ENCODE measurements at regions of chr1 and their contacts with region 1.

Region 1: DNA sequence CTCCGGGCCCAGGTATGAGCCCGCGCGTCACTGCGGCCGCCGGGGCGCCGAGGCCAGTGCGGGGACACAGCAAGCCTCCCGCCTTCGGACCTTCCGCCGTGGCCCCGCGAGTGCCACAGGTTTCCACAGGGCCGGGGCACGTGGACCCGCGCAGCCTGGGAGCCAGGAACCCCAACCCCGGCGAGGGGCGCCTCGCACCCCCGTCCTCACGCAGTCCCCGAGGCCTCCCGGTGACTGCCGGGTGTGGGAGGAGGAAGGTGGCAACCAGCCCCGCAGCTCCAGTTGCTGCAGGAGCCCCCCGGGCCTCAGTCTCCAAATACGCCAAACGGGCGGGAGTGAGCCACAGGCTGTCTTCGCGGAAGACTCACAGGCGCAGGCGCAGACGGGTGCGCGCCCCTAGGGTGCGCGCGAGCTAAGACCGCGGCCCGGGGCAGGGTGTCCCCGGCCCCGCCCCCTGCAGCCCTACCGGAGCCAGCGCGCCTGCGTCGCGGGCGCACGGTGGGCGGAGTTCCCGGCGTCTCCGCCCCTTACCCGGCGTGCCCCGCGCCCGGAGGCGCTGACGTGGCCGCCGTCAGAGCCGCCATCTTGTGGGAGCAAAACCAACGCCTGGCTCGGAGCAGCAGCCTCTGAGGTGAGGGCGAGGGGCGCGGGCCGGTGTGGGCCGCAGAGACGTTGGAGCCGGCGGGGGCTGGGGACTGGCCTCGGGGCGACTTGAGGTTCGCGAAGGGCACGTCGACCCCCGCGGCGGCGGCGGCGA is at the start of gene ARF1:
- H3K4me3 Mint-ChIP-seq: peak within 1 kb of the TSS; percentile 92
- H3K27ac Mint-ChIP-seq: peak within 1 kb of the TSS; percentile 96
- H3K4me1 Mint-ChIP-seq: peaks cover 61% of the 10 kb centered on the region
- H3K27me3 Mint-ChIP-seq: peaks cover 2% of the 10 kb centered on the region

Region 2: DNA sequence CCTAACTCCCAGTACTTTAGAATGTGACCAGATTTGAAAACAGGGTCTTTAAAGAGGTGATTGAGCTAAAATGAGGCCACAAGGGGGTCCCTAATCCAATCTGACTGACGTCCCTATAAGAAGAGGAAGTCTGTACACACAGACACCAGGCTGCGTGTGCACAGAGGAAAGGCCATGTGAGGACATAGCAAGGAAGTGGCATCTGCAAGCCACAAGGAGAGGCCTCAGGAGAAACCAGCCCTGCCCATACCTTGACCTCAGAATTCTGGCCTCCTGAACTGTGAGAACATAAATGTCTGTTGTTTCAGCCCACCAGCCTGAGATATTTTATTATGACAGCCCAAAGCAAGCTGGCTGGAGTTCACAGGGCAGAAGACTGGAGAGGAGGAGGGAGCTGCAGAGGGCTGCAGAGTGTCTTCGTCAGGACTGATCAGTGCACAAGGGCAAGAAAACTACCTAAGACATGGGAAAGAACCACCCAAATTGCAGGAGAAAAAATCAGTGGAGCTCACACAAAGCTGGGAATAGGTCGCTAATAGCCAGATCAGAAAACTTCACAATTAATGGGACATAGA is 120.6 kb before region 1 on chr1:
- intact Hi-C with region 1: no loop called
- H3K4me3 Mint-ChIP-seq: no peak overlapping the region
- H3K27ac Mint-ChIP-seq: no peak overlapping the region
- H3K4me1 Mint-ChIP-seq: peaks cover 7% of the 10 kb centered on the region
- H3K27me3 Mint-ChIP-seq: peaks cover 3% of the 10 kb centered on the region

Region 3: GRCh38 chr1:228102791-228103620 is 20.7 kb after region 1 on chr1 and contains the start of gene C1orf35:
- intact Hi-C with region 1: loop called (anchors 2 kb)
- H3K4me3 Mint-ChIP-seq: peak within 1 kb of the TSS; percentile 96
- H3K27ac Mint-ChIP-seq: peak within 1 kb of the TSS; percentile 89
- H3K4me1 Mint-ChIP-seq: peaks cover 77% of the 10 kb centered on the region
- H3K27me3 Mint-ChIP-seq: no peaks in the 10 kb centered on the region

Region 4: GRCh38 chr1:228165372-228166169 is 83.3 kb after region 1 on chr1 and contains the start of gene IBA57:
- intact Hi-C with region 1: loop called (anchors 1 kb)
- H3K4me3 Mint-ChIP-seq: peak within 1 kb of the TSS; percentile 83
- H3K27ac Mint-ChIP-seq: peak within 1 kb of the TSS; percentile 91
- H3K4me1 Mint-ChIP-seq: peaks cover 71% of the 10 kb centered on the region
- H3K27me3 Mint-ChIP-seq: peaks cover 21% of the 10 kb centered on the region

Region 5: DNA sequence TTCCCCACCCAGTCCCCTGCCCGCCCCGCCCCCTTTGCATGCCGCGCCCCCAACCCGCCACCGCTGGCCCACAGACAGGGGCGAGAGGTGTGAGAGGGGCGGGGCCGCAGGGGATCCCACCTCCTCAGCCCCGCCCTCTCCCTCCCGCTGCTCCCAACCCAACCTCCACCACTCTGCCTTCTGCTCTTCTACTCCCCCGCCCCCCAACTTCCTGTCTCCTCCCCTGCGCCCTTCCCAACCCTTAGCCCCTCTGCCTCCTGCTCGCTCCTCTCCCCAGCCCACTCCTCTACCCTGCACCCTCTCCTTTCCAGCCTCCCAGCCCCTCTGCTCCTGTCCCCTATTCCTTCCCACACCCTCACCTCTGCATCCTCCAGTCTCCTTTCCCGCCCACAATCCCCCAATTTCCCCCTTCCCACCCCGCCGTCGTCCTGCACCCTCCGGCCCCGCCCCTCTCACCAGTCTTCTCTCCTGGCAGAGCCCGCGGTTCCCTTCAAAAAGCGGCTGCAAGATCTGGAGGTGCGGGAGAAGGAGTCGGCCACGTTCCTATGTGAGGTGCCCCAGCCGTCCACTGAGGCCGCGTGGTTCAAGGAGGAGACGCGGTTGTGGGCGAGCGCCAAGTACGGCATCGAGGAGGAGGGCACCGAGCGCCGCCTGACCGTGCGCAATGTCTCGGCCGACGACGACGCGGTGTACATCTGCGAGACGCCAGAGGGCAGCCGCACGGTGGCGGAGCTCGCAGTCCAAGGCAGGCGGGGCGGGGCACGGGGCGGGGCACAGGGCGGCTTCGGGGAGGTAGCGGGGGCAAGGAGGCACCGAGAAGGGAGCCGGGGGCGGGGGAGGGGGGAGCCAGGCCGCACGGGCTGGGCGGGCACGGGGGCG is 130.9 kb after region 1 on chr1:
- intact Hi-C with region 1: no loop called
- H3K4me3 Mint-ChIP-seq: peak overlapping the region; percentile 75
- H3K27ac Mint-ChIP-seq: peak overlapping the region; percentile 34
- H3K4me1 Mint-ChIP-seq: peaks cover 8% of the 10 kb centered on the region
- H3K27me3 Mint-ChIP-seq: peaks cover 29% of the 10 kb centered on the region